ENCODE measurements at regions of chr5 and their contacts with region 1.

Region 1: GRCh38 chr5:126594676-126595485 is at the start of gene ALDH7A1:
- DNase-seq: peak; percentile 98
- H3K4me3 Mint-ChIP-seq: peak within 1 kb of the TSS; percentile 91
- H3K27ac Mint-ChIP-seq: peak within 1 kb of the TSS; percentile 84
- H3K4me1 Mint-ChIP-seq: peaks cover 36% of the 10 kb centered on the region
- H3K27me3 Mint-ChIP-seq: no peaks in the 10 kb centered on the region
- CTCF ChIP-seq: peak; percentile 40
- total RNA-seq, gene ALDH7A1: 46.8 and 89.1 TPM in 2 replicates

Region 2: GRCh38 chr5:126339215-126339805 is 255.6 kb before region 1 on chr5:
- CTCF ChIA-PET with region 1: interaction called, 22 read pairs
- POLR2A ChIA-PET with region 1: interaction called, 9 read pairs
- intact Hi-C with region 1: loop called (anchors 1 kb)
- DNase-seq: peak; percentile 86
- H3K4me3 Mint-ChIP-seq: no peak overlapping the region
- H3K27ac Mint-ChIP-seq: no peak overlapping the region
- H3K4me1 Mint-ChIP-seq: peaks cover 5% of the 10 kb centered on the region
- H3K27me3 Mint-ChIP-seq: no peaks in the 10 kb centered on the region
- CTCF ChIP-seq: peak; percentile 85

Region 3: GRCh38 chr5:126519634-126520592 is 75.0 kb before region 1 on chr5:
- CTCF ChIA-PET with region 1: interaction called, 3 read pairs
- POLR2A ChIA-PET with region 1: interaction called, 11 read pairs
- intact Hi-C with region 1: no loop called
- DNase-seq: no peak
- H3K4me3 Mint-ChIP-seq: no peak overlapping the region
- H3K27ac Mint-ChIP-seq: peak overlapping the region; percentile 68
- H3K4me1 Mint-ChIP-seq: peaks cover 26% of the 10 kb centered on the region
- H3K27me3 Mint-ChIP-seq: no peaks in the 10 kb centered on the region
- CTCF ChIP-seq: no peak

Region 4: GRCh38 chr5:126531543-126532120 is 63.2 kb before region 1 on chr5:
- CTCF ChIA-PET with region 1: interaction called, 10 read pairs
- POLR2A ChIA-PET with region 1: no interaction called
- intact Hi-C with region 1: no loop called
- DNase-seq: no peak
- H3K4me3 Mint-ChIP-seq: no peak overlapping the region
- H3K27ac Mint-ChIP-seq: no peak overlapping the region
- H3K4me1 Mint-ChIP-seq: peaks cover 1% of the 10 kb centered on the region
- H3K27me3 Mint-ChIP-seq: no peaks in the 10 kb centered on the region
- CTCF ChIP-seq: no peak

Region 5: DNA sequence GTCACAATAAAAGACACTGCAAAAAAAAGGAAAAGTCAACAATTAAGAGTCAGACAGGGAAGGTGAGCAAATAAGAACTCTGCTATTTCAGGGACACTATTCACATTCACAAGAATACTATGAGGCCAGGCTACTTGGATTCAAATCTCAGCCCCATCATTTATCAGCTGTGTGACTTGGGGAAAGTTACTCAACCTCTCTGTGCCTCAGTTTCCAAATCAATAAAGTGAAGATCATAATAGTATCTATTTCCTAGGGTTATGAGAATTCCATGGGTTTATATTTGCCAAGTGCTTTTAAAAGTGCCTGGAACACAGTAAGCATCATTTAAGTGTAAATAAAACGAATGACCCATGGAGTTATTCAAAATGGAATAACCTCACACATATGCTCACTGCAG is 56.3 kb before region 1 on chr5:
- CTCF ChIA-PET with region 1: interaction called, 25 read pairs
- POLR2A ChIA-PET with region 1: interaction called, 11 read pairs
- intact Hi-C with region 1: loop called (anchors 1 kb)
- DNase-seq: no peak
- H3K4me3 Mint-ChIP-seq: no peak overlapping the region
- H3K27ac Mint-ChIP-seq: peak overlapping the region; percentile 25
- H3K4me1 Mint-ChIP-seq: peaks cover 8% of the 10 kb centered on the region
- H3K27me3 Mint-ChIP-seq: no peaks in the 10 kb centered on the region
- CTCF ChIP-seq: no peak

Region 6: GRCh38 chr5:126544087-126544740 is 50.7 kb before region 1 on chr5:
- CTCF ChIA-PET with region 1: interaction called, 25 read pairs
- POLR2A ChIA-PET with region 1: interaction called, 11 read pairs
- intact Hi-C with region 1: loop called (anchors 1 kb)
- DNase-seq: peak; percentile 60
- H3K4me3 Mint-ChIP-seq: no peak overlapping the region
- H3K27ac Mint-ChIP-seq: peak overlapping the region; percentile 33
- H3K4me1 Mint-ChIP-seq: no peaks in the 10 kb centered on the region
- H3K27me3 Mint-ChIP-seq: no peaks in the 10 kb centered on the region
- CTCF ChIP-seq: peak; percentile 63

Region 7: GRCh38 chr5:126576974-126577373 is 17.9 kb before region 1 on chr5:
- CTCF ChIA-PET with region 1: interaction called, 21 read pairs
- POLR2A ChIA-PET with region 1: interaction called, 15 read pairs
- intact Hi-C with region 1: no loop called
- DNase-seq: no peak
- H3K4me3 Mint-ChIP-seq: no peak overlapping the region
- H3K27ac Mint-ChIP-seq: no peak overlapping the region
- H3K4me1 Mint-ChIP-seq: no peaks in the 10 kb centered on the region
- H3K27me3 Mint-ChIP-seq: no peaks in the 10 kb centered on the region
- CTCF ChIP-seq: no peak

Region 8: DNA sequence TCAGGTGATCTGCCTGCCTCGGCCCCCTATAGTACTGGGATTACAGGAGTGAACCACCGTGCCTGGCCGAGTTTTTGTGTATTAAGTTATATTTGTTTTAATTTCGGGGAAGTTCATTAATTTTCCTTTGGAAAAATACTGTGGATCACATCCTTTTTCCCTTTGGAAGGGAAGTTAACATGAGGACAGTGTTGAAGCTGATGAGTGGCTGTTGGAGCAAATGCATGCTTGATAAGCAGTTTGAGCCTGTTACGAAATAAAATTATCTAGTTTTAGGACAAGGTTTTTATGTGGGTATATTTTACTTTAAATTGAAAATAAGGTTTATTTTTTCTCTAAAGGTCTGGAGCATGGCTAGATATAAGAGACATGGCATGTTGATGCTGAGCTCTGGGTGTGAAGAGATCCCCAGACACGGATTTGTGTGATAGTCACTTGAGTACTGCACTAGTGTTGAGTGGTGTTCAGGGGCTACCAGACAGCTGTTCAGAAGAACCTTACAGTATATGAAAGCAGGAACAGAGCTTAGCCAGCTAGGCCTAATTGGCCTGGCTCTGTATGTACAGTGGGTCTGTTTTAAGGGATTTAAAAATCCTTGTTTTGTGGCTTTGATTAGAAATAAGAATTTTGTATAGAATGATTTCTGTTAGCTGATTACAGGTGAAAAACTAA is 199.4 kb after region 1 on chr5:
- CTCF ChIA-PET with region 1: no interaction called
- POLR2A ChIA-PET with region 1: no interaction called
- intact Hi-C with region 1: no loop called
- DNase-seq: no peak
- H3K4me3 Mint-ChIP-seq: no peak overlapping the region
- H3K27ac Mint-ChIP-seq: peak overlapping the region; percentile 68
- H3K4me1 Mint-ChIP-seq: peaks cover 18% of the 10 kb centered on the region
- H3K27me3 Mint-ChIP-seq: no peaks in the 10 kb centered on the region
- CTCF ChIP-seq: no peak

Measured in MCF 10A (cell line).